Activated B cell treated with CpG ODN at 0.5 μM for 24 hours (primary cell): ENCODE measurements at regions of chr19 and their contacts with region 1.

Region 1: DNA sequence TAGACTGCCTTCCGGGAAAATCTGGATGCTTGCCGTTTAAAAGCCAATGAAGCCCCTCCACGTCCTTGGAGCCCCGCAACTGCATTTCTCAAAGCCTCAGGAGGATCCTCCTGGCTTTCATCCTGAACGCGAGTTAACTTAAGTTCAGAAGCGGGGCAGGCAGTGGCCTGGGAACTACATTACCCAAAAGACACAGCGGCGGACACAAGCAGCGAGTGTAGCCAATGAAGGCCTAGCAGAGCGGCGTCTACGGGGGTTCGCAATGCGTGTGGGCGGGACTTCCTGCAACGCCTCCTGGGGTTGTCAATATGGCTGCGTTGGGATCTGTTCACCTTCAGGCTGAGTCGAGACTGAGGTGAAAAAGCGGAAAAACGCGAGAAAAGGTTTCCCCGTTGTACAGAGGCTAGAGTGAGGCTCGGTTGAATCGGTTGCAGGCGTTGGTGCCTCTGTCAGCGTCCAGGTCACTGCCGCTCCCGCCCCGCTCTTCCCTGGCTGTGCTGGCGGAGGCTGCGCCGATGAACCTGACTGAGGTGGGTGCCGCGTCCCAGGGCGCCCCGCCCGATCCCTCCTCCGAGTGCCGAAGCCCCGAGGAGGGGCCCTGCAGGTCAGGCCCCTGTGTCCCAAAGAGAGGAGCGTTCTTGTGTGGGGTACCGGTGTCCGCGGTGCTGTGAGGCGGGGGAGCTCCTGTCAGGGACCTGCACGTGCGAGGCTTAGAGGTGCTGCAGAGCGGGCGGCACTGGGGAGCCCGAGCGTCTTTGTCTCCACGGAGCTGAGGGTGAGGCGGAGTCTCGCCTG is at the start of gene ZNF17:
- DNase-seq: peak; percentile 79
- ATAC-seq: peak; percentile 100
- H3K4me3 Mint-ChIP-seq: peak within 1 kb of the TSS; percentile 94
- H3K27ac Mint-ChIP-seq: peak within 1 kb of the TSS; percentile 85
- H3K4me1 Mint-ChIP-seq: peaks cover 24% of the 10 kb centered on the region
- H3K27me3 Mint-ChIP-seq: no peaks in the 10 kb centered on the region
- CTCF ChIP-seq: no peak
- total RNA-seq, gene ZNF17: 16.1 and 18.6 TPM in 2 replicates

Region 2: GRCh38 chr19:57338877-57339276 is 72.2 kb before region 1 on chr19:
- CTCF ChIA-PET with region 1: no interaction called
- POLR2A ChIA-PET with region 1: no interaction called
- intact Hi-C with region 1: no loop called
- DNase-seq: no peak
- ATAC-seq: no peak
- H3K4me3 Mint-ChIP-seq: no peak overlapping the region
- H3K27ac Mint-ChIP-seq: no peak overlapping the region
- H3K4me1 Mint-ChIP-seq: no peaks in the 10 kb centered on the region
- H3K27me3 Mint-ChIP-seq: no peaks in the 10 kb centered on the region
- CTCF ChIP-seq: no peak

Region 3: DNA sequence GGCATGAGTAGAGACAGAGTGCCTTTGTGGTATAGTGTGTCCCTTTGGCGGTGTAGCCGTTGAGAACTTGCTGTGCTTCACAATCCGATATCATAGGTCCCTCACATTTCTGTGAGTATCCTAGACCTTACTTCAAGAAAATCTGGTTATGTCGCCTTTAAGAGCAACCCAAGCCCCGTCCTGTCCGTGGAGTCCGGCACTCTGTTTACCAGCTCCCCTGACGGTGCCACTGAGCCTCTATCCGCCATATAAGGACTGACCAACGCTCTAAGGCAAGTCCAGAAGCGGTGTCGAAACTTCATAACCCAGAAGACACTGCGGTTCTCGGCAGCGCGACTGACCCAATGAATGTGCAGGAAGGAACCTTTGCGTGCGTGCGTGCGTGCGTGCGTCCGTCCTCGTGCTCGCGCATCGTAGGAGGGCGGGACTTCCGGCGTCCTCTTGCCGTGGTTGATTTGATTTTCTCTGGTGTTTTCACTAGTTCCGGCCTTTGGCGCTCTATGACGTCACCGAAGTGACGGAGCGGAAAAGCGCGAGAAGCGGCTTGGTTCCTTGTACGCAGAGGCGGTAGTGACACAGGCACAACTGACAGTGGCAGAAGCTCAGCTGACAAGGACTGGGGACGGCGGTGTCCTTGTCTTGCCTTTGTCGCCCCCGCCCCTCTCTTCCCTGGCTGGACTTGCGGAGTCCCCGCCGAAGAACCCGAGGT is 47.9 kb before region 1 on chr19 and contains the starts of genes TRAPPC2B and ZNF547:
- CTCF ChIA-PET with region 1: no interaction called
- POLR2A ChIA-PET with region 1: no interaction called
- intact Hi-C with region 1: loop called (anchors 1 kb)
- DNase-seq: peak; percentile 99
- ATAC-seq: peak; percentile 94
- H3K4me3 Mint-ChIP-seq: peak within 1 kb of the TSS; percentile 92
- H3K27ac Mint-ChIP-seq: peak within 1 kb of the TSS; percentile 95
- H3K4me1 Mint-ChIP-seq: peaks cover 17% of the 10 kb centered on the region
- H3K27me3 Mint-ChIP-seq: no peaks in the 10 kb centered on the region
- CTCF ChIP-seq: no peak
- total RNA-seq, gene TRAPPC2B: 9.7 and 10.2 TPM in 2 replicates
- total RNA-seq, gene ZNF547: 6.0 and 6.3 TPM in 2 replicates

Region 4: GRCh38 chr19:57477191-57478008 is 66.3 kb after region 1 on chr19 and contains the start of gene ZNF772:
- CTCF ChIA-PET with region 1: no interaction called
- POLR2A ChIA-PET with region 1: no interaction called
- intact Hi-C with region 1: loop called (anchors 2 kb)
- DNase-seq: peak; percentile 68
- ATAC-seq: peak; percentile 98
- H3K4me3 Mint-ChIP-seq: peak within 1 kb of the TSS; percentile 91
- H3K27ac Mint-ChIP-seq: peak within 1 kb of the TSS; percentile 90
- H3K4me1 Mint-ChIP-seq: peaks cover 29% of the 10 kb centered on the region
- H3K27me3 Mint-ChIP-seq: no peaks in the 10 kb centered on the region
- CTCF ChIP-seq: no peak
- total RNA-seq, gene ZNF772: 13.8 and 17.9 TPM in 2 replicates

Region 5: DNA sequence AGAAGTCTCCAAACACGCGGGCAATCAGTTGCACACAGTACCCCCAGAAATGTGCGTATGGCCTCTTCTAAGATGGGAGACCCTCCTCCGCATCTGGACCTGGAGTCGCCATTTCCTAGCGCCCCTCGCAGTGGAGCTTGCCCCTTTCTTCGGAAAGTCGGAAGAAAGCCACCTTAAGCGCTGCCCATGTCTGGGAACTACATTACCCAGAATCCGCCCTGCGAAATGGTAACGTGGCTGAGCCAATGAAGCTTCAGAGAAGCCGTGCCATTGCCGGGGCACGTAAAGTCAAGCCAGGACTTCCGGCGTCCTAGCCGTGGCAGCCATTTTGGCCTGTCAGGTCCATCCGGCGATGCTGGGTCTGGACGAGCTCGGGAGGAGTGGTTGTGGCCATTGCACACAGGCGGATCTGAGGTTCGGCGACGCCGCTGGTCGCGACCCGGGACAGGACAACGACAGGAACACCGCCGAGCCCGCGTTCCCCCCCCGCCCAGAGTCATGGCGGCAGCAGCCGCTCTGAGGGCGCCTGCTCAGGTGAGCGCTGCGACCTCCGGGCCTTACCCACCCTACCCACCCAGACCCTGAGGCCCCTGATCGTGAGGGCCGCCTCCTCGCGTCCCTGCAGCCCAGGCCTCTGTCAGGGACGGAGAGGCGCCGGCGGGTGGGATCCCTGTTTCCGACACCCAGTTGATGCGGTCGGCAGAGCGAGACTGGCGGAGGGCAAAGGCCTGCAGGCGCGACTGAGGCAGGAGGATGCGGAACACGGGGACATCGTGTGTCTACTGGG is 358.5 kb after region 1 on chr19 and contains the start of gene ZNF586:
- CTCF ChIA-PET with region 1: no interaction called
- POLR2A ChIA-PET with region 1: no interaction called
- intact Hi-C with region 1: loop called (anchors 1 kb)
- DNase-seq: peak; percentile 76
- ATAC-seq: peak; percentile 98
- H3K4me3 Mint-ChIP-seq: peak within 1 kb of the TSS; percentile 95
- H3K27ac Mint-ChIP-seq: peak within 1 kb of the TSS; percentile 86
- H3K4me1 Mint-ChIP-seq: peaks cover 54% of the 10 kb centered on the region
- H3K27me3 Mint-ChIP-seq: no peaks in the 10 kb centered on the region
- CTCF ChIP-seq: no peak
- total RNA-seq, gene ZNF586: 29.4 and 33.7 TPM in 2 replicates

Region 6: DNA sequence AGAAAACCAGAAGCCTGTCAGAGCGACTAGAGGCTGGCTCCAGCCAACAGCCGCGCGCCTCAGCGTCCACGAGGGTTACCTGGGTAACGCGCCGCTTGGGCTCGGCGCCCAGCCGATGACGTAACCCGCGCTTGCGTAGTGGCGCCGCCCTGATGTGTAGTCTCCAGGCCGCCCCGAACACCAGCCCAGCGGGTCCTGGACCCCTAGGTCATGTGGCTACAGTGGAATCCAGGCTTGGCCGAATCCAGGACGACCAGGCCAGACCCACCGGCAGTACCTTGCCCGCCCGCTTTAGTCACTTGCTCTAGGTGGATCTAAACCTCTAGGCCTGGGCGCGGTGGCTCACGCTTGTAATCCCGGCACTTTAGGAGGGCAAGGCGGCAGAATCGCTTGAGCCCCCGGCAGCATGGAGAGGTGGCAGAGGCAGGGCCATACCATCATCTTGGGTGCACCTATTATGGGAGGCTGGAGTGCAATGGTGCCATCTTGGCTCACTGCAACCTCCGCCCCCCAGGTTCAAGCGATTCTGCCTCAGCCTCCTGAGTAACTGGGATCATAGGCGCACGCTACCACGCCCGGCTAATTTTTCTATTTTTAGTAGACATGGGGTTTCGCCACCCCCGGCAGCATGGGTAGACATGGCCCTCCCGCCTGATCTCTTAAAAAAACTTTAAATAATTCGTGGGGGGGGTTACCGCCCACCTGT is 598.7 kb after region 1 on chr19:
- CTCF ChIA-PET with region 1: no interaction called
- POLR2A ChIA-PET with region 1: no interaction called
- intact Hi-C with region 1: loop called (anchors 5 kb)
- DNase-seq: peak; percentile 69
- ATAC-seq: peak; percentile 93
- H3K4me3 Mint-ChIP-seq: peak overlapping the region; percentile 82
- H3K27ac Mint-ChIP-seq: peak overlapping the region; percentile 72
- H3K4me1 Mint-ChIP-seq: peaks cover 4% of the 10 kb centered on the region
- H3K27me3 Mint-ChIP-seq: peaks cover under 1% of the 10 kb centered on the region
- CTCF ChIP-seq: no peak